Activated naive CD4-positive, alpha-beta T cell treated with anti-CD3 and anti-CD28 coated beads for 36 hours (primary cell): ENCODE measurements at regions of chr1 and their contacts with region 1.

Region 1: DNA sequence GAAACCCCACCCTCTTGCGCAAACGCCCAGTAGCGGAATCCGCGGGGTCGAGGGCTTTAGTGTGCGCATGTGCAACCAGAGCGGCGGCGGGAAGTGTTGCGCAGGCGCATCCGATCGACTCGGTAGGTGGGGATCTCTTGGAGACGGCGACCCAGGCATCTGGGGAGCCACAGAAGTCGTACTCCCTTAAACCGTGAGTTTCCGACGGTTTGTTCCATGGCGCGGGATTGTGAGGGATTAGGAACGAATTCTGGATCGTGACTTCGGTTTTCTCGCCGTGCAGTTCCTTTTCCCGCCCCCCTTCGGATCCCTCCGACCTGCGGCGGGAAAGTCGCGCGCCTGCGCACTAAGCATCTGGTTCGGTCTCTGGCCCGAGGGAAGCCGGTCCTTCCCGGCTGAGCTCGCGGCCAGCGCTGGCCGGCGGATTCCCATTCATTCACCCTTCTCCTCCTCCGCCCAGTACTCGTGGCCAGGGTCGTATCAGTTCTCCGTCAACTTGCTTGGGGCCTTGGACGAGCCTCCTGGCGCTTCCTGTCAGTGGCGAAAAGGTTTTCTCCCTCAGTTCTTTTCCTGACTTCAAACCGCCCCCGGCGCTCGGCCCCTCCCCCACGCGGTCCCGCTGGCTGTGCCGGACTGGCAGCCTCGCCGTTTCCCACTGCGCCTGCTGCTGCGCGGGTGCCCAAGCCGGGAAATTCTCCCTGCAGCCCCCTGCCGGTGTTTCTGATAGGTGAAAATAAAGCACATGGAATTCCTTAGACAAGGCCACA is at the start of gene CDC7:
- DNase-seq: peak; percentile 87
- H3K4me3 Mint-ChIP-seq: no peak within 1 kb of the TSS
- H3K27ac Mint-ChIP-seq: no peak within 1 kb of the TSS
- H3K4me1 Mint-ChIP-seq: peaks cover 15% of the 10 kb centered on the region
- H3K27me3 Mint-ChIP-seq: no peaks in the 10 kb centered on the region
- total RNA-seq, gene CDC7: 27.0 TPM

Region 2: GRCh38 chr1:90721210-90722194 is 779.4 kb before region 1 on chr1:
- CTCF ChIA-PET with region 1: no interaction called
- intact Hi-C with region 1: loop called (anchors 5 kb)
- DNase-seq: peak; percentile 72
- H3K4me3 Mint-ChIP-seq: no peak overlapping the region
- H3K27ac Mint-ChIP-seq: no peak overlapping the region
- H3K4me1 Mint-ChIP-seq: peaks cover 58% of the 10 kb centered on the region
- H3K27me3 Mint-ChIP-seq: peaks cover 83% of the 10 kb centered on the region

Region 3: DNA sequence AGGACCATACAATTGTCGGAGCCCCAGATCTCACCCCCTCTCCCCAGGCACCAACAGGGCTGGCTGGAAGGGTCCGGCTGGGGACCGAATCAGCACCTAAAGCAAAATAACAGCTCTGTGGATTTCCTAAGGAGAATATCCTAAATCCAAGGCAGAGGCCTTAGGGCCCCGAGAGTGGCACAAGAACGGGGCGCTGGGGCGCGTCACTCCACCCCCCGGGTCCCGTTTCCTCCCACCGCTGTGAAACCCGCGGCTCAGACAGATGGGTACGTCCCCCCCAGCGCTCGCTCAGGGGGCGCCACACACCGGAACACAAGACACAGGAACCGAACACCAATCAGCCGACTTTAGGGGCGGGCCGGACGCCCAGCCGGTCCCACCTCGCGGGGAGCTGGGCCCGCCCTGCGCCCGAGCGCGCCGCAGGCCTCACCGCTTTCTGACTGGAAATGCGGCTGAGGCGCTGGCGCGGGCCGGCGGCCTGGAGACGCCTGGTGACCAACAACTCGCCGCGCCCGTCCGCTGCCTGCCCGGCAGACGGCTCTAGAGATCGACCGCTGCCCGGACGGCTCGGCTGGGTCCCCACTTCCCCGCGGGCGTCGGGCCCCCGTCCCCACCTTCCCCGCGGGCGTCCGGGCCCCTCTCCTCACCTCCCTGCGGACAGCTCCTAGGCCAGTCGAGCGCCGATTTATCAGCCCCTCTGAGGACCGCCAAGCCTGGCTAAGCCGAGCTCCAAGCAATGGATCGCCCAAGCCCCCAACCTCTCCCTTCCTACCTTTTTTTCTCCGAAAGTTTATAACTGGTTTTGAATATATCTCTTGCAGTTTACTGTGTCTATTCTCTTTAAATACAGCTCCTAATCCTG is 96.6 kb before region 1 on chr1 and contains the start of gene HFM1:
- CTCF ChIA-PET with region 1: no interaction called
- intact Hi-C with region 1: loop called (anchors 10 kb)
- DNase-seq: peak; percentile 63
- H3K4me3 Mint-ChIP-seq: peak within 1 kb of the TSS; percentile 72
- H3K27ac Mint-ChIP-seq: no peak within 1 kb of the TSS
- H3K4me1 Mint-ChIP-seq: peaks cover 2% of the 10 kb centered on the region
- H3K27me3 Mint-ChIP-seq: peaks cover 42% of the 10 kb centered on the region
- total RNA-seq, gene HFM1: not detected

Region 4: DNA sequence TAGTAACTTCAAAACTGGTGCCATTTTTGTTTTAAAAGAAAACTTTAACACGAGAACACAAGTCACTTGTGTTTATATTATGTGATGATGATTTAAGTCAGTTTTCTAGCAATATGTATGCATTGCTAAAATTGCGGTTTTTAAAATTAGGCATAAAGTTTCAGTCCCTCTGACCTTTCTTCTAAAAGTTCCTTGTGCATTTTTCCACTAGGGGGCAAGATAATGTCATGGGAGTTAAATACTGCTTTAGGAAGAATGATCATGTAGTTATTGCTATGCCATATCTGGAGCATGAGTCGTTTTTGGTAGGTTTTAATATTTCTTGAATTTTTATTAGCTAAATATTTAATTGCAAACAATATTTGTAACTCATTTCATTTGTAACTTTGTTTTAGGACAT is 10.4 kb after region 1 on chr1:
- CTCF ChIA-PET with region 1: interaction called, 10 read pairs
- intact Hi-C with region 1: no loop called
- DNase-seq: no peak
- H3K4me3 Mint-ChIP-seq: no peak overlapping the region
- H3K27ac Mint-ChIP-seq: no peak overlapping the region
- H3K4me1 Mint-ChIP-seq: no peaks in the 10 kb centered on the region
- H3K27me3 Mint-ChIP-seq: no peaks in the 10 kb centered on the region

Region 5: GRCh38 chr1:91523482-91523881 is 22.5 kb after region 1 on chr1:
- CTCF ChIA-PET with region 1: interaction called, 3 read pairs
- intact Hi-C with region 1: loop called (anchors 2 kb)
- DNase-seq: peak; percentile 55
- H3K4me3 Mint-ChIP-seq: no peak overlapping the region
- H3K27ac Mint-ChIP-seq: no peak overlapping the region
- H3K4me1 Mint-ChIP-seq: peaks cover 18% of the 10 kb centered on the region
- H3K27me3 Mint-ChIP-seq: no peaks in the 10 kb centered on the region

Region 6: GRCh38 chr1:91876040-91876470 is 375.1 kb after region 1 on chr1:
- CTCF ChIA-PET with region 1: no interaction called
- intact Hi-C with region 1: loop called (anchors 2 kb)
- DNase-seq: peak; percentile 61
- H3K4me3 Mint-ChIP-seq: no peak overlapping the region
- H3K27ac Mint-ChIP-seq: peak overlapping the region; percentile 5
- H3K4me1 Mint-ChIP-seq: peaks cover 74% of the 10 kb centered on the region
- H3K27me3 Mint-ChIP-seq: no peaks in the 10 kb centered on the region

Region 7: DNA sequence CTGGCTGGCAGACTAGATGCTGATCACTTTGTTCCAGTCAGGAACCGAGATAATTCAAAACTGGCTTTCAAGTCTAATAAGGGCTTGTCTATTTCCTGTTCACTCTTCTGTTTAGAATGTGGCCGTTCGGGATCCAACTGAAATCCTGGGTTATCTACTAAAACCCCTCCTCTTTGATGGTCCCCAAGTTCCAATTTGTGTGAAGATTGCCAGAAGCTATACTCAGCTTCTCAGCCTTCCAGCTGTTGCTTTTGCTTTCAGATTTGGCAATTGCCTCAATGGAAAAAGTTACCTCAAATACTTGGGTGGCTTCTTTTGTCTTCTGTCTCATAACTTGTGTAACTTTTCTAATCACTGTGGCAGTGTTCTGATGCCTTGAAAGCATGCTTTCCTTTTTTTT is 622.9 kb after region 1 on chr1:
- CTCF ChIA-PET with region 1: no interaction called
- intact Hi-C with region 1: no loop called
- DNase-seq: peak; percentile 29
- H3K4me3 Mint-ChIP-seq: peak overlapping the region; percentile 42
- H3K27ac Mint-ChIP-seq: peak overlapping the region; percentile 62
- H3K4me1 Mint-ChIP-seq: peaks cover 13% of the 10 kb centered on the region
- H3K27me3 Mint-ChIP-seq: no peaks in the 10 kb centered on the region